ENCODE measurements at regions of chr12 and their contacts with region 1.

Region 1: DNA sequence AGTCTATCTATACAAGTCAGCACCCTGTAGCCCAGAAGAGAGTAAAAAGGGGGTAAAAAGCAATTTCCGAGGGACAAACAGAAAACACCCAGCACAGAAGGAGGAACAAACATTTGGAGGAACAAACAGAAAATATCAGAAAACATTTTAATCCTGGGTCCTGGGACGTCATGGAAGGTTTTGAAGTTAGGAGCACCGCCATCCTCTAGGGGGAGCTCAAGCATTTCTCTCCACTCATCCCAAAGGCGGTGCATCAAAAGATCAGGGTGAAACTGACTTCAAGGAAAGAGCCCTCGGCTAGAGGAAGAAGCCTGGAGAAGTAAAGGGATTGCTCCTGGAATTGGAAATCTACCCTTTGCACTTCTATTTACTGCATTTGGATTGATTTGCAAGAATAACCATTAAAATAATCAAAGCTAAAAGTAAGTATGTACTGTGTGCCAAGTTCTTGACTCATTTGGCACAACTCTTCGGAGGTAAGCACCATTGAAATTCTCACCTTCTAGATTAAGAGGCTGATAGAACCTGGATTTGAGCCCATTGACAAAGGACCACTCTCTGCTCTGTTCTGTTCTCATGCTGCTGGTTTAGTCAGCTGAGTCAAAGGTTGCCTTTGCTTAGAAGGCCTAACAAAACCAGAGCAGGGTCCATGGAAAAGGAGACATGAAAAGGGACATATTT is 17.2 kb upstream of the POC1B start:
- DNase-seq: peak; percentile 75 to 86
- H3K4me3 ChIP-seq: no peak overlapping the region
- H3K4me3 Mint-ChIP-seq: no peak overlapping the region
- H3K27ac Mint-ChIP-seq: no peak overlapping the region
- H3K4me1 ChIP-seq: peaks cover 29% of the 10 kb centered on the region
- H3K4me1 Mint-ChIP-seq: peaks cover 17% of the 10 kb centered on the region
- H3K27me3 ChIP-seq: no peaks in the 10 kb centered on the region
- H3K27me3 Mint-ChIP-seq: no peaks in the 10 kb centered on the region
- CTCF ChIP-seq: peak; percentile 88 to 89

Region 2: GRCh38 chr12:89568484-89568883 is 25.4 kb after region 1 on chr12:
- CTCF ChIA-PET with region 1: no interaction called
- POLR2A ChIA-PET with region 1: no interaction called
- intact Hi-C with region 1: loop called (anchors 1 kb)
- DNase-seq: peak in 1 of 2 experiments; percentile 17
- H3K4me3 ChIP-seq: no peak overlapping the region
- H3K4me3 Mint-ChIP-seq: no peak overlapping the region
- H3K27ac Mint-ChIP-seq: peak overlapping the region; percentile 73
- H3K4me1 ChIP-seq: peaks cover 37% of the 10 kb centered on the region
- H3K4me1 Mint-ChIP-seq: peaks cover 39% of the 10 kb centered on the region
- H3K27me3 ChIP-seq: no peaks in the 10 kb centered on the region
- H3K27me3 Mint-ChIP-seq: no peaks in the 10 kb centered on the region
- CTCF ChIP-seq: no peak

Region 3: GRCh38 chr12:89648211-89648930 is 105.3 kb after region 1 on chr12:
- CTCF ChIA-PET with region 1: no interaction called
- POLR2A ChIA-PET with region 1: no interaction called
- intact Hi-C with region 1: loop called (anchors 5 kb)
- DNase-seq: peak; percentile 79 to 87
- H3K4me3 ChIP-seq: no peak overlapping the region
- H3K4me3 Mint-ChIP-seq: peak overlapping the region; percentile 16
- H3K27ac Mint-ChIP-seq: peak overlapping the region; percentile 48
- H3K4me1 ChIP-seq: peaks cover 63% of the 10 kb centered on the region
- H3K4me1 Mint-ChIP-seq: peaks cover 52% of the 10 kb centered on the region
- H3K27me3 ChIP-seq: no peaks in the 10 kb centered on the region
- H3K27me3 Mint-ChIP-seq: no peaks in the 10 kb centered on the region
- CTCF ChIP-seq: no peak

Region 4: GRCh38 chr12:89709157-89709994 is 166.3 kb after region 1 on chr12:
- CTCF ChIA-PET with region 1: interaction called, 3 read pairs
- POLR2A ChIA-PET with region 1: no interaction called
- intact Hi-C with region 1: loop called (anchors 1 kb)
- DNase-seq: peak; percentile 98 to 99
- H3K4me3 ChIP-seq: peak overlapping the region; percentile 98
- H3K4me3 Mint-ChIP-seq: peak overlapping the region; percentile 79
- H3K27ac Mint-ChIP-seq: peak overlapping the region; percentile 91
- H3K4me1 ChIP-seq: peaks cover 11% of the 10 kb centered on the region; the same call in 1 of the 2 replicates
- H3K4me1 Mint-ChIP-seq: peaks cover 18% of the 10 kb centered on the region
- H3K27me3 ChIP-seq: no peaks in the 10 kb centered on the region
- H3K27me3 Mint-ChIP-seq: no peaks in the 10 kb centered on the region
- CTCF ChIP-seq: no peak

Region 5: DNA sequence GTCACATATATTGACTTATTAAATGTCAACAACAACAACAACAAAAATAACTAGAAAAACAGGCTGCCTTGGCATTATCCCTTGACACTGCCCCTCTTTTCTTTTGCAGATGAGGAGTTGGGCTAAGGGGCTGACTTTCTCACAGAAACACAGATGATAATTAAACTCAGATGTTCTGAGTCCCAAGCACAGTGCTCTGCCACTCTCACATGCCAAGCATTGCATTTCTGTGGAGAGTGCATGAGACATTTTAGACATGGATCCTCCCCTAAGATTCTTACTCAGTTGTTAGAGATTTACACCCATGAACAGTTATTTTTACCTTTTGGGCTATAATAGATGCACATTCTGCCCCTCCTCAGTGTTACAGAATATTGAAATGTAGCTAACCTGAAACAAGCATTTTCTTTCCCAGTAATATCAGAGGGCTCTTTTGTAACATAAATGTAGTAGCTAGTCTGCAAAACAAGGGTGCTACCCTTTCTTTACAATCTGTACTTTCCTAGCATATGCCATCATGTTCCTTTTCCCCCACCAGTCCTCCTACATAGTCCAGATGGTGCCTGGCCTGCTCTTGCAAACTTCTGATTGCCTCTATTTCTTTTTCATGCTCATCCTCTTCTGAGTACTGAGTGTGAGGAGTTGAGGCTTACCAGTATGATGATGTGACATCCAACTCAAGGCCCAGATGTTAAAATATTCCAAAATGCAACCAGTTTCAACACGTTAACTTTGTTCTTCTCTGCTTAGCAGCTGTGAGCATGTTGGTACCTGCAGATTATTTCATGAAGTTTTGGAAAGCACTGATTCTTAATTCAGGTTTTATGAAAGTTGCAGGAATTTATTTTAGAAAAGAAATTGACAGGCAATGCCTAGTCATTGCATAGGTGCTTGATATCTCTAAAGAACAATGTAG is 290.5 kb after region 1 on chr12:
- CTCF ChIA-PET with region 1: no interaction called
- POLR2A ChIA-PET with region 1: no interaction called
- intact Hi-C with region 1: loop called (anchors 10 kb)
- DNase-seq: no peak
- H3K4me3 ChIP-seq: no peak overlapping the region
- H3K4me3 Mint-ChIP-seq: no peak overlapping the region
- H3K27ac Mint-ChIP-seq: no peak overlapping the region
- H3K4me1 ChIP-seq: peaks cover 34% of the 10 kb centered on the region
- H3K4me1 Mint-ChIP-seq: peaks cover 26% of the 10 kb centered on the region
- H3K27me3 ChIP-seq: no peaks in the 10 kb centered on the region
- H3K27me3 Mint-ChIP-seq: no peaks in the 10 kb centered on the region
- CTCF ChIP-seq: no peak

Region 6: DNA sequence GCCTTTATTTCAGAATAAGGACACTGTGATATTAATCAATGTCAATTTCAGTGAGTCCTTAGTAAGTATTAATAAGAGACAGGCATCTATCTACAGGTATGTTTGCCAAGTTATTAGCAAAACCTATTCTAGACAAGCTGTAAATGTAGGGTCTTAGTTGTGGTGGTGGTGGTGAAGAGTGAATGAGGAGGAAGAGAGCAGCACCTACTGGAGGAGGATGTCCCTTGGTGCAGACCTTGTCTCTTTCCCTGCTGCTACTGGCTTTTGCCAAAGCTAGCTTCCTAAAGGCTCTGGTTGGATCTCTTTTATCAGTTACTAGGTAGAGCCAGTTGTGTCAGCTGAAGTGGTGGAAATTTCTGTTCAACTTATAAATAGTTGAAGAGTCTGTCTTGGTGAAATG is 470.4 kb after region 1 on chr12:
- CTCF ChIA-PET with region 1: no interaction called
- POLR2A ChIA-PET with region 1: no interaction called
- intact Hi-C with region 1: loop called (anchors 1 kb)
- DNase-seq: peak; percentile 23 to 42
- H3K4me3 ChIP-seq: no peak overlapping the region
- H3K4me3 Mint-ChIP-seq: no peak overlapping the region
- H3K27ac Mint-ChIP-seq: no peak overlapping the region
- H3K4me1 ChIP-seq: no peaks in the 10 kb centered on the region
- H3K4me1 Mint-ChIP-seq: no peaks in the 10 kb centered on the region
- H3K27me3 ChIP-seq: no peaks in the 10 kb centered on the region
- H3K27me3 Mint-ChIP-seq: no peaks in the 10 kb centered on the region
- CTCF ChIP-seq: no peak

Region 7: GRCh38 chr12:90253674-90254181 is 710.7 kb after region 1 on chr12:
- CTCF ChIA-PET with region 1: no interaction called
- POLR2A ChIA-PET with region 1: no interaction called
- intact Hi-C with region 1: loop called (anchors 5 kb)
- DNase-seq: peak; percentile 6 to 41
- H3K4me3 ChIP-seq: no peak overlapping the region
- H3K4me3 Mint-ChIP-seq: no peak overlapping the region
- H3K27ac Mint-ChIP-seq: no peak overlapping the region
- H3K4me1 ChIP-seq: no peaks in the 10 kb centered on the region
- H3K4me1 Mint-ChIP-seq: no peaks in the 10 kb centered on the region
- H3K27me3 ChIP-seq: no peaks in the 10 kb centered on the region
- H3K27me3 Mint-ChIP-seq: no peaks in the 10 kb centered on the region
- CTCF ChIP-seq: no peak

Measured in Caco-2 (cell line).